GM13977 (cell line): ENCODE measurements at regions of chr5 and their contacts with region 1.

Region 1: DNA sequence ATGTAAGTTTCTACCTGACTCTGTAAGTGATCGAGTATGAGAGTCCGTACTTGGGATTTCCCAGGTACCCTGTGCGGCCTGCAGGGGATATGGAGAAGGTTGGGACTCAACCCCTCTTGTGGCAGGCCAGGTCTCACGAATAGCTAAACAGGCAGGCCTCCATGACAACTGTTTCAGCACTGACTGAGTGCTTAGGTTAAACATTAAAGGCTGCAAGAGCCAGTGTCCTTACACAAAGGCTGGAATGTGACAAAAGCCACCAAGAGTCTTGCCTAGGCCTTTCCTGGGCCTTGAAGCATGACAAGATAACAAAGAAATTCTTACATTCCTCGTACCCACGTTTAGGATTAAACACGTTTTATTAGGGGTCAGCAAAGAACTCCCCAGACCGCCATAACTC is 58.6 kb downstream of the THBS4 start:
- DNase-seq: no peak
- CTCF ChIP-seq: no peak

Region 2: DNA sequence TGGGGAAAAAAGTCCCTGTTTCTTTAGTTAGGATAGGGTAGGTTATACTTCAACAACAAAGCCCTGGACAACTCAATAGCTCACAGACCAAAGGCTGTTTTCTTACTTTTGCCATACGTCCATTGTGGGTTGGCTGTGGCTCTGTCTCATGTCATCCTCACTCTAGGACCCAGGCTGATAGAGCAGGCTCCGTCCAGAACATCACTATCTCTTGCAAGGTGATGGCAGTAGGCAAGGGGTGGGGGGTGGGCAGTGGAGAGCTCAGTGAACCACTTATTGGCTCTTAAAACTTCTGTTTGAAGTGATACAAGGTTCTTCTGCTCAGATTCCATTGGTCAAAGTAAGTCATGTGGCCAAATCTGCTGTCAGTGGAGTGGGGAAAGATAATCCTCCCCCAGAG is 277.8 kb before region 1 on chr5:
- in situ Hi-C with region 1: no loop called
- DNase-seq: no peak
- CTCF ChIP-seq: no peak

Region 3: GRCh38 chr5:80275347-80275746 is 181.6 kb after region 1 on chr5:
- in situ Hi-C with region 1: loop called (anchors 10 kb)
- DNase-seq: no peak
- CTCF ChIP-seq: peak; percentile 60